ENCODE measurements at regions of chr12 and their contacts with region 1.

Region 1: DNA sequence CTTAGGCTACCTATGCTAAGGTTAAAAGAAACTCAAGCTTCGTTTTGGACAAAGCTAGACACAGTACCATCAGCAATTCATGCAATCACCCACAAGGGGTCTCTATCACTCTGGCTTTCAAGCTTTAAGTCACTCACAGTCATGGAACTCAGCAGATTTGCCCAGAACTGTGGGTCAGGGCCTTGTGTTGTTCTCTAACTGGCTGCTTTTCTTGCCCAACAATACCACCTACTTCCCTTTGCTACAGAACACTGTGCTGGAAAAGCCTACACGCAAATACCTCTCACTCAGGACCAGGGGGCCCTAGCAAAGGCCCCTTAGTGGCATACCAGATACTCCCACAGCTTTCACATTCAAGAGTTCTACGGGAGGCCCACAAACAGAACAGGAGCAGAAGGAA is 9.1 kb downstream of the NEMP1 start:
- DNase-seq: peak; percentile 90
- H3K4me3 Mint-ChIP-seq: peak overlapping the region; percentile 61
- H3K27ac Mint-ChIP-seq: peak overlapping the region; percentile 89
- H3K4me1 Mint-ChIP-seq: peaks cover 45% of the 10 kb centered on the region
- H3K27me3 Mint-ChIP-seq: no peaks in the 10 kb centered on the region

Region 2: DNA sequence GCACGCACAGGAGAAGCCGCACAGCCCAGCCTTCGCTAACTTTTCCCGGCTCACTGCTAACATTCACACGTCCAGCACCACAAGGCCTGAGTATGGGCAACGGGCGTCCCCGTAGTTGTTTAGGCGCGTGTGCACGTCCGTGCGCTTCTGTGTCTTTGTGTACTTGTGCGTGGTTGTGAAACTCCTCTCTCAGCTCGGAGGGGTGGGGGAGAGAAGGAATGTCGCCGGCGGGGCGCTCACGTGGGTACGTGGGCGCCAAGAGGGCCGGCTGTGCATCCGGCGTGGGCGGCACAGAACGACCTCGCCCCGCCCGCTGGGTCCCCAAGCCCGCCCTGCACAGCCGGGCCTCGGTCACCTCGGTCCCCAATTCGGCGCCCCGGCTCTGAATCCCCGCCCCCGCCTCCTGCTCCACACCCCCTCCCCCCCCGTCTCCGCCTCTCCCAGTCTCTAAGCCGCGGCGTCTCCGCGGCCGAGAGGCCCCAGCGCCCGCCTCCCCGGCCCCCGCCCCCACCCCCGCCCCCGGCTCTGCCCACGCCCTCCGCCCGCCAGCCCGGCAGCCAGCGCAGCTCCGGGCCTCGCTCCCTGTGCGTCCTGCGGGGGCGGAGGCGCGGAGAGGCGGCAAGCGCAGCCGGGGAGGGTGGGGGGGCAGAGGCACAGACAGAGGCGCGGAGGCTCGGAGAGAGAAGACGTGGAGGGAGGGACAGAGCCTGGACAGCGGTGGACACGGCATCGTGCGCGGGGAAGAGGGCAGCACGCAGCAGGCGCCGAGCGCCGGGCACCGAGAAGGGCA is 19.1 kb after region 1 on chr12 and contains the start of gene NAB2:
- intact Hi-C with region 1: loop called (anchors 1 kb)
- DNase-seq: peak; percentile 98
- H3K4me3 Mint-ChIP-seq: peak within 1 kb of the TSS; percentile 96
- H3K27ac Mint-ChIP-seq: peak within 1 kb of the TSS; percentile 97
- H3K4me1 Mint-ChIP-seq: peaks cover 68% of the 10 kb centered on the region
- H3K27me3 Mint-ChIP-seq: no peaks in the 10 kb centered on the region
- total RNA-seq, gene NAB2: 70.5 and 76.7 TPM in 2 replicates